MCF 10A (cell line): ENCODE measurements at regions of chr19 and their contacts with region 1.

Region 1: GRCh38 chr19:18388100-18388959 is 2.4 kb downstream of the GDF15 start:
- DNase-seq: peak; percentile 54
- H3K4me3 Mint-ChIP-seq: peak overlapping the region; percentile 79
- H3K27ac Mint-ChIP-seq: no peak overlapping the region
- H3K4me1 Mint-ChIP-seq: peaks cover 23% of the 10 kb centered on the region
- H3K27me3 Mint-ChIP-seq: no peaks in the 10 kb centered on the region
- CTCF ChIP-seq: peak; percentile 95

Region 2: DNA sequence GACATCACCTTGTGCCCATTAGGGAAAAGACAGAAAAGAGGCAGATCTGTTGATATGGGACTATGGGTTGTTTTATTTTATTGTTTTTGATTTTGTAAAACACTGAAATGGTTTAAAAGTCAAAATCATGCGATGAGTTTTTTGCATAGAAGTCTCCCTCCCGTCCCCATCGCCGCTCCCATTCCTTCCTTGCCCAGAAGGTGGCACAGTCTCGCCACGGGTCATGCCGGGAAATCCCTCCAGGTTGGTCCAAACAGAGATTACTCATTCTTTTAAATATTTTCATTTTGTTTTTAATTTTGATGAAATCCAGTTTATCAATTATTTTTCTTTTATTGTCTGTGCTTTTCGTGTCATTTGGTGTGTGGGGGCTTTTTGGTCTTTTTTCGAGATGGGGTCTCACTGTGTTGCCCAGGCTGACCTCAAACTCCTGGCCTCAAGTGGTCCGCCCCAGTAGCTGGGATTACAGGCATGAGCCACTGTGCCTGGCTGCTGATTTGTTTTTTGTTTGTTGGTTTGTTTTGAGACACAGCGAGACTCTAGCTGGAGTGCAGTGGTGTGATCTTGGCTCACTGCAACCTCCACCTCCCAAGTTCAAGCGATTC is 38.7 kb before region 1 on chr19:
- CTCF ChIA-PET with region 1: interaction called, 38 read pairs
- POLR2A ChIA-PET with region 1: interaction called, 3 read pairs
- intact Hi-C with region 1: loop called (anchors 1 kb)
- DNase-seq: peak; percentile 75
- H3K4me3 Mint-ChIP-seq: no peak overlapping the region
- H3K27ac Mint-ChIP-seq: no peak overlapping the region
- H3K4me1 Mint-ChIP-seq: peaks cover 25% of the 10 kb centered on the region
- H3K27me3 Mint-ChIP-seq: peaks cover 12% of the 10 kb centered on the region
- CTCF ChIP-seq: peak; percentile 77

Region 3: GRCh38 chr19:18364826-18365528 is 23.4 kb before region 1 on chr19:
- CTCF ChIA-PET with region 1: interaction called, 22 read pairs
- POLR2A ChIA-PET with region 1: interaction called, 44 read pairs
- intact Hi-C with region 1: no loop called
- DNase-seq: peak; percentile 97
- H3K4me3 Mint-ChIP-seq: peak overlapping the region; percentile 25
- H3K27ac Mint-ChIP-seq: peak overlapping the region; percentile 97
- H3K4me1 Mint-ChIP-seq: peaks cover 19% of the 10 kb centered on the region
- H3K27me3 Mint-ChIP-seq: no peaks in the 10 kb centered on the region
- CTCF ChIP-seq: no peak

Region 4: DNA sequence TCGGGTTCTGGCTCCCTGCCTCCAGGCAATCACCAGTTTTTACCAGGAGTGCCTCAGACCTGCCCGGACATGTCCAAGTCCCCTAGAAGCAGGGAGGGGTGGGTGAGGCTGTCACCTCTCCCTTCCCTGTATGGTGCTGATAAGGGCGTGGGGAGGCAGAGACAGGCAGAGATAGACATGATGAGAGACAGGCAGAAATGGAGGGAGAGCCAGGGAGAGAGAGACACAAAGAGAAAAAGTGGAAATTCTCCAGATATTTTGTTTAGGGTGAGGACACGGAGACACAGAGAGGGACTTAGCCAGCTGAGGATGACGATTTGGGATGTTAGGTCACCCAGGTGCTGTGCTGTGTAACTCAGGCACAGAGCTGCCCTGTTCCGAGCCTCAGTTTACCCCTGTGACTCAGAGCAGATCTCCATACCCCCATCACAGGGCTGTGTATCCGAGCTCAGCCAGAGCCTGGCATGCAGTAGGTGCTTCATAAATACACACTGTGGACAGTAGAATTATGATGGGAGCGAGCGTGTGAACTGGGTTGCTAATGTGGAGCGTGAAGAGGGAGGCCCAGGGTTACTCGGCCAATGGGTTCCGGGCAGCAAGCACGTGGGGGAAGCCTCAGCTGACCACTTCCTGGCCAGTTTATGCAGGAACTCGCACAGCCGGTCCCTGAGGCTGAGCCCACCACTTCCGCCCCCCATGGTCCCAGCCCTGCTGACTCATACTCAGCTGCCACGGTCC is 14.3 kb before region 1 on chr19:
- CTCF ChIA-PET with region 1: interaction called, 6 read pairs
- POLR2A ChIA-PET with region 1: interaction called, 15 read pairs
- intact Hi-C with region 1: no loop called
- DNase-seq: peak; percentile 93
- H3K4me3 Mint-ChIP-seq: peak overlapping the region; percentile 15
- H3K27ac Mint-ChIP-seq: peak overlapping the region; percentile 99
- H3K4me1 Mint-ChIP-seq: peaks cover 16% of the 10 kb centered on the region
- H3K27me3 Mint-ChIP-seq: no peaks in the 10 kb centered on the region
- CTCF ChIP-seq: no peak

Region 5: GRCh38 chr19:18408053-18408476 is 19.7 kb after region 1 on chr19:
- CTCF ChIA-PET with region 1: interaction called, 61 read pairs
- POLR2A ChIA-PET with region 1: no interaction called
- intact Hi-C with region 1: no loop called
- DNase-seq: no peak
- H3K4me3 Mint-ChIP-seq: no peak overlapping the region
- H3K27ac Mint-ChIP-seq: no peak overlapping the region
- H3K4me1 Mint-ChIP-seq: peaks cover 6% of the 10 kb centered on the region
- H3K27me3 Mint-ChIP-seq: no peaks in the 10 kb centered on the region
- CTCF ChIP-seq: no peak

Region 6: GRCh38 chr19:18419195-18419698 is 30.9 kb after region 1 on chr19 and contains the start of gene SSBP4:
- CTCF ChIA-PET with region 1: interaction called, 61 read pairs
- POLR2A ChIA-PET with region 1: interaction called, 6 read pairs
- intact Hi-C with region 1: no loop called
- DNase-seq: peak; percentile 80
- H3K4me3 Mint-ChIP-seq: peak within 1 kb of the TSS; percentile 77
- H3K27ac Mint-ChIP-seq: peak within 1 kb of the TSS; percentile 72
- H3K4me1 Mint-ChIP-seq: peaks cover 29% of the 10 kb centered on the region
- H3K27me3 Mint-ChIP-seq: no peaks in the 10 kb centered on the region
- CTCF ChIP-seq: peak; percentile 51
- total RNA-seq, gene SSBP4: 22.3 and 26.3 TPM in 2 replicates